Activated CD8-positive, alpha-beta memory T cell treated with anti-CD3 and anti-CD28 coated beads, Interleukin-2, amount 10 ng/mL, durations not matched to agents 7 days and 5 days (primary cell): ENCODE measurements at regions of chr1 and their contacts with region 1.

Region 1: GRCh38 chr1:168342572-168343280 is 62.0 kb downstream of the TBX19 start:
- DNase-seq: peak; percentile 94
- ATAC-seq: peak; percentile 93
- H3K4me3 Mint-ChIP-seq: no peak overlapping the region
- H3K27ac Mint-ChIP-seq: peak overlapping the region; percentile 87
- H3K4me1 Mint-ChIP-seq: peaks cover 75% of the 10 kb centered on the region
- H3K27me3 Mint-ChIP-seq: no peaks in the 10 kb centered on the region

Region 2: DNA sequence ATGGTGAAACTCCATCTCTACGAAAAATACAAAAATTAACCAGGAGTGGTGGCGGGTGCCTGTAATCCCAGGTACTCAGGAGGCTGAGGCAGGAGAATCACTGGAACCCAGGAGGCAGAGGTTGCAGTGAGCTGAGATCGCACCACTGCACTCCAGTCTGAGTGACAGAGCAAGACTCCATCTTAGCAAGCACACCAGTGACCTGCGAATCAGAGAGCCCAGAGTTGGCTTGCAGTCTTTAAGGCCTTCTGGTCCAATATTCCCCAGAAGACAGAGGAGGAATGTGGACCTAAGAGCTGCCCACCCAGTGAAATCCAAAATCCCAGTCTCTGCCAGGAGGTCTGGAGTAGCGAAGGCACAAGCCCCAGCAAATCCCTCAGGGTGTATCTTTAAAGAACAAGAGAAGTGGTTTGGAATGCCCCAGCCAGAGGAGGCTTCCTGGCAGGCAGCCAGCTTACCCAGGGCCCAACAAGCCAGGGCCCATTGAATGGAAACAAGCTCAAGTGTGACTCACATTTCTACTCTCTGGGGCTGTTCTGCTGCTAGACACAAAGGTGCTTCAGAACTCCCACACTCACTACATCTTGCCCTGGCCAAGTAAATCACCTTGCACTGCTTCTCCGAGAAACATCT is 229.9 kb before region 1 on chr1:
- CTCF ChIA-PET with region 1: no interaction called
- DNase-seq: no peak
- ATAC-seq: no peak
- H3K4me3 Mint-ChIP-seq: no peak overlapping the region
- H3K27ac Mint-ChIP-seq: no peak overlapping the region
- H3K4me1 Mint-ChIP-seq: no peaks in the 10 kb centered on the region
- H3K27me3 Mint-ChIP-seq: peaks cover 7% of the 10 kb centered on the region

Region 3: DNA sequence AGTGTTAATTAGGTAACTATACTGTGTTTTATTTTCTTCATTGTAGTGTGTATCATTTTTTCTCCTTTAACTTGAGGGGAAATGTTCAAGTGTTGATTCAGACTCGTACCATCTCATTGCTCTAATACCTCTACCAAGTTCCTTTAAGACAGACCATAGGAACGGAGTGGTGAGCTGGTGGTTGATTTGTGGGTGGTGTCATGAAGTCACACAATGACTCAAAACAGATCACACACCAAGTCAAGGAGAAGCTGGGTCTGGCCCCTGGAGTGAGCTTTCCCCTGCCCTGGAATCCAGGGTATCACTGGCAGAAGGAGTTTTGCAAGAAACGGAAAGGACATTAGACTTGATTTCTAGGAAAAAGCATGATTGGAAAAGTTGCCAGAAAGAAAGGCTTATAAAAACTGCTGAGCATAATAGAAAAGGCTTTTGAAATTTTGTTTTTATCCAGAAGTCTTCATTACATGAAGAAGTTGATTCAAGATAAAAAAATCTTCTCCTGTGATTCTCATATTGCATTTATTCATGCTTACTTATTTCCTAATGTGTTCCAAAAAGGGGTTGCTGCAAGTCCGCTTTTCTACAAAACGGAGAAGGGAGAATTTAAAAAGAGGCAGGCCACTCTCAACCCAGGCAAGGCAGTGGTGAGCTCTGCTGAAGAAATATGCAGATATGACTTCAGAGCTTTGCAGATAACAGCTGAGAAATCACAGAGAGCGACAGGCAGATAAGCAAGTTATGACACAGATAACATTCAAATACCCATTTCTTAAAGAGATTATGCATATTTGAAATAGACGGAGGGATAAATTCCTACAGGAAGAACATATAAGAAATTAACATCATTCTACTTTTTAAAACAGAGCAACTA is 17.7 kb after region 1 on chr1:
- CTCF ChIA-PET with region 1: interaction called, 254 read pairs
- DNase-seq: peak; percentile 95
- ATAC-seq: peak; percentile 71
- H3K4me3 Mint-ChIP-seq: peak overlapping the region; percentile 37
- H3K27ac Mint-ChIP-seq: peak overlapping the region; percentile 85
- H3K4me1 Mint-ChIP-seq: peaks cover 55% of the 10 kb centered on the region
- H3K27me3 Mint-ChIP-seq: peaks cover 2% of the 10 kb centered on the region

Region 4: DNA sequence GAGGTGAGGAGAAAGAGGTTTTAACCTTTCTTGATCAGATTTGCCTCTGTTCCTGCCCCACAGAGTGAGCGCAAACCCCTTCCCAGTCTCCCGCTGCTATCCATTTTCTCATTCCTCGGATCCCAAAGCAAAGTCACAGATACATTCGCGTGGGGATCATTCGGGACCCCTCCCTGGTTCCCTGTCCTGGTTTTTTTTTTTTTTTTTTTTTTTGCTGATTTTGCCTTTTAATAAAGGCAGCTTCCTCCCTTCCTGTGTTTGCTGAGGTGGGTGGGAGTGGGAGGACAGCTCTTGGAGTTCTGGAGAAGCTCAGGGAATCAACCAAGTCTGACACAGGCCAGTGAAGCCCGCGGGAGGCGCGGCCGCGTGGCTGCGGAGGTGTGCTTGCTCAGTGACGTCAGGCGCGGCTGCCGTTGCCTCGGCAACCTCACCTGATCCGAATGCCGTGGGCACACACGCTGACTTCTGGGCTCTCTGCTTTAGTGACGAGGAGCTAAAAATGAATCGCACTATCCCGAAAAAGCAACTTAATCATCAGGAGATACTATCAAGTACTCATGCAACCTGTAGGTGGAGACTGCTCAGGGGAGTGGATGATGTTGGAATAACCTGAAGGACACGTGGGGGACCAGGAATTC is 44.3 kb after region 1 on chr1:
- CTCF ChIA-PET with region 1: interaction called, 16 read pairs
- DNase-seq: peak; percentile 77
- ATAC-seq: peak; percentile 95
- H3K4me3 Mint-ChIP-seq: no peak overlapping the region
- H3K27ac Mint-ChIP-seq: peak overlapping the region; percentile 67
- H3K4me1 Mint-ChIP-seq: peaks cover 19% of the 10 kb centered on the region
- H3K27me3 Mint-ChIP-seq: no peaks in the 10 kb centered on the region

Region 5: DNA sequence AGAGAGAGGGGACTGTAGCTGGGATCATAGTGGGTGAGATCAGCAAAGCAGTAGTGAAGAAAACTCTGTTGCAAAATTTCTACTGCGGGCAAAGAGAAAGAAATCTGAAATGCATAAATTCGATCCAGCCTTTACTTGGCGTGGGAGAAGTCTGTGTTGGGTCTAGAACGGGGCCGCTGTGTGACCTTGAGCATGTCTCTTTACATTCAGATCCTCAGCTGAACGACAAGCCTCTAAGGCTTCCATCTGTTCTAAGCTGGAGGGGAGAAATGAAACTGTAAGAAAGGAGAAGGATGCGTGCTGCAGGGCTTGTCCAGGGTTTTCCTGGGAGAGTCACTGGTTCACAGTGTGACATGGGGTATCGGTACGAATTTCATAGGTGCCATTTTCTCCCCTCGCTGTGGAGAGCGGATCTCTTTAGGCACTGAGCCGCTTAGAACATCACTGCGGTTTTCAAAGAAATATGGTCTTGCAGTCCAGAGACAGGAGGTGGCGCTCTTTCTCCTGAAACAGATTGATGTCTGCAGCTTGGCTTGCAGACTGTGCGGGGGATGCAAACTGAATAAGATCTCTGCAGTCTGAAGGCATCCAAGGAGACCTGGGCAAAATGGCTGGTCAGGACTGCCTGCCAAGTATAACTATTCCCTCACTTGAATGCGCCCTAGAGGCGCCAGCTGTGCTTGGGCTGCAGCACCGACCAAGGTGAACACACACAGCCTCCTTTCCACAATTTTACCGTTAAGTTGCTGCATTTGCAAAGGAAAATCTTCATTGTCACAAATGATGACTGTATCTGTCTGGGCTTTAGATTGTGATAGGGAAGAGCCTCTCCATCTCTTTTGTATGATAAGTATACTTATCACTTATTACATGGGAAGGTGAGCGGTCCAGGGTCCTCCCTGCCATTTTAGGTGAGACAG is 97.0 kb after region 1 on chr1:
- CTCF ChIA-PET with region 1: interaction called, 173 read pairs
- DNase-seq: peak; percentile 95
- ATAC-seq: peak; percentile 93
- H3K4me3 Mint-ChIP-seq: peak overlapping the region; percentile 68
- H3K27ac Mint-ChIP-seq: peak overlapping the region; percentile 94
- H3K4me1 Mint-ChIP-seq: peaks cover 59% of the 10 kb centered on the region
- H3K27me3 Mint-ChIP-seq: no peaks in the 10 kb centered on the region

Region 6: GRCh38 chr1:169348383-169349036 is 1005.8 kb after region 1 on chr1:
- CTCF ChIA-PET with region 1: interaction called, 17 read pairs
- DNase-seq: no peak
- ATAC-seq: no peak
- H3K4me3 Mint-ChIP-seq: no peak overlapping the region
- H3K27ac Mint-ChIP-seq: no peak overlapping the region
- H3K4me1 Mint-ChIP-seq: peaks cover 17% of the 10 kb centered on the region
- H3K27me3 Mint-ChIP-seq: no peaks in the 10 kb centered on the region